ENCODE measurements at regions of chr6 and their contacts with region 1.

Region 1: DNA sequence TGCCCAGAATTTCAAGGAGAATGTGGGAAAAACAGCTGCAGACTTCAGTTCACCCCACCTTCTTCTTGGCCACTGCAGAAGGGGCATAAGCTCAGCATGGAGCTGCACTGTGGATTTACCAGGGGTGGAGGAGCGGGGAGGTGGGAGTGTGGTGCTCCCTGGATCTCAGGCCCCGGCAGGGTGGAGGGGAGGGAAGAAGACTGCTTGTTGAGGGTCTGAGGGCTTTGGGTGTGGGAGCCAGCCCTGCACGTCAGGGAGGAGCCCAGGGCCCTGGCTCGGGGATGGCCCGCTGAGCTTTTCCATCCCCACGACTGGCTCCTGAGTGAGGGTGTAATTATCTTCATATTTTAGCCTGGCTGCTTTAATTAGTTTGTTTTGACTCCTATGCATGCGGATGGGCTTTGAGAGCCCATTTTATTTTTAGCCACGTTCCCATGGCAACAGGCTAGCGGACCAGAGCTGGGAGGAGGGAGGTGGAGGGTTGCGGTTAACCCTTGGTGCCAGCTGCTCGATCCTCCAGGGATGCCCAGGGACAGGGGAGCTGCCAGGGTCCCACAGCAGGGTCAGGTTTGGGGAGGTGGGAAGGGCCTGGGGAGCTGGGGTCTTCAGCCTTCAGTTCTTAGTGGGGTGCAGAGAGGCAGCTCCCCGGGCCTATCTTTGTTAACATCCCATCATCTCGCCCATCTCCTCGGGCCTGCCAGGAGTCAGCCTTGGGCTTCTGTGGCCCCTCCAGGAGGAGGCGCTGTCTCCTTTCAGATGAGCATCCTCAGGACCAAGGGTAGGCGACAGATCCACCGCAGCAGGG is 68.2 kb downstream of the RAB44 start:
- H3K4me3 Mint-ChIP-seq: no peak overlapping the region
- H3K27ac Mint-ChIP-seq: no peak overlapping the region
- H3K4me1 Mint-ChIP-seq: peaks cover 28% of the 10 kb centered on the region
- H3K27me3 Mint-ChIP-seq: peaks cover 5% of the 10 kb centered on the region

Region 2: DNA sequence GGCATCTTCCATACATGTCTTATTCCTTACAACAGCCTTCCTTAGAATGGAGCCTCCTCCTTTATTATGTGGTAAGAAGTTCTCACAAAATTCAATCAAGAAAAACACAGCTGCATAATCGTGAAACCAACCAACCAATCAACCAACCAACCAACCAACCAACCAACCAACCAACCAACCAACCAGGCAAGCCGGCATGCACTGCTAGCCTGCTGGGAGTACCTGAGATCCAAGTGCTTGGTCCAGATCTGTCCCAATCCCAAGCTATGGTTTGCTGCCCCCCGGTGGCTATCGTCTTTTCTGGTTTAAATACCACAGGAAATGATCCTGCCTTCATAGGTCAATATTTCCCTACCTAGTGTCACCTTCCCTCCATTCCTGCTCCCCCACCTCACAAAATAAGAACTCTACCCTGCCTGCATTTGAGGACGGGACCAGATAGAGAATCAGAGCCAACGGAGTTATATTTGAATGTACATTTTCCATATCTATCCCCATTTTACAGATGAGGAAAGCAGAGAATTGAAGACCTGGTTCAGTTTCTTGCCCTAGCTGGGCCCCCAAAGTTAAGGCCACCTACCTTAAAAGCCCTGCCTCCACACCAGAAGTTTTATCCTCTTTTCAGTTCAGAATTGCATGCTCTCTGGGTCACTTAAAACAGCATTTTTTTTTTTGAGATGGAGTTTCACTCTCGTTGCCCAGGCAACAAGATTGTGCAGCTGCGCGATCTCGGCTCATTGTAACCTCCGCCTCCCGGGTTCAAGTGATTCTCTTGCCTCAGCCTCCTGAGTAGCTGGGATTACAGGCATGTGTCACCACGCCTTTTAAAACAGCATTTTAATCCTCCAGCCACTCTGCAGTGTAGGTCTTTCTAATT is 41.0 kb before region 1 on chr6:
- intact Hi-C with region 1: no loop called
- H3K4me3 Mint-ChIP-seq: no peak overlapping the region
- H3K27ac Mint-ChIP-seq: peak overlapping the region; percentile 22
- H3K4me1 Mint-ChIP-seq: peaks cover 43% of the 10 kb centered on the region
- H3K27me3 Mint-ChIP-seq: no peaks in the 10 kb centered on the region

Region 3: GRCh38 chr6:36781669-36782068 is 15.9 kb after region 1 on chr6:
- intact Hi-C with region 1: loop called (anchors 2 kb)
- H3K4me3 Mint-ChIP-seq: no peak overlapping the region
- H3K27ac Mint-ChIP-seq: peak overlapping the region; percentile 63
- H3K4me1 Mint-ChIP-seq: peaks cover 55% of the 10 kb centered on the region
- H3K27me3 Mint-ChIP-seq: peaks cover 9% of the 10 kb centered on the region

Region 4: DNA sequence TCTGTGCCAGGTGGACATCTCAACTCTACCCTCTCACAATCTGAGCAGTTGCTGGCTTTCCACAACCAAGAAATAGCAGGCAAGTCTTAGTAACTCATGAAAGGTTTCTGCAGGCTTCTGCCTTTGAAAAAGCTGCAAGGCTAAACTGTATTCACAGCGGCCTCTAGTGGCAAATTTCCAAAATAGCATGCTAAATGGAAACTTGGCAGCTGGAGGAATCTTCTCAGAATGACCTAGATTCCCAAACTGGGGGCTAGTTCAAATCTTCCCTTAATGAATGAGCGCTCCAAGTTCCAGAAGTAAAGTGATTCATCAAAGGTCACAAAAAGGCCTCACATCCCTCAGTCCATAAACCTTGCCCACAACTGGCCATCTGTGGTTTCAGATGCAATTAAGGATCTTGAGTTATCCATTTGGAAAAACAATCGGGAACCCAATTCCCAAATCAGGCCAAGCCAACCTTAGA is 85.4 kb after region 1 on chr6:
- intact Hi-C with region 1: loop called (anchors 1 kb)
- H3K4me3 Mint-ChIP-seq: no peak overlapping the region
- H3K27ac Mint-ChIP-seq: no peak overlapping the region
- H3K4me1 Mint-ChIP-seq: peaks cover 88% of the 10 kb centered on the region
- H3K27me3 Mint-ChIP-seq: no peaks in the 10 kb centered on the region

Region 5: GRCh38 chr6:37018198-37019064 is 252.6 kb after region 1 on chr6:
- intact Hi-C with region 1: loop called (anchors 1 kb)
- H3K4me3 Mint-ChIP-seq: no peak overlapping the region
- H3K27ac Mint-ChIP-seq: peak overlapping the region; percentile 1
- H3K4me1 Mint-ChIP-seq: peaks cover 88% of the 10 kb centered on the region
- H3K27me3 Mint-ChIP-seq: no peaks in the 10 kb centered on the region

Region 6: GRCh38 chr6:37061157-37061804 is 295.5 kb after region 1 on chr6:
- intact Hi-C with region 1: no loop called
- H3K4me3 Mint-ChIP-seq: no peak overlapping the region
- H3K27ac Mint-ChIP-seq: no peak overlapping the region
- H3K4me1 Mint-ChIP-seq: peaks cover 41% of the 10 kb centered on the region
- H3K27me3 Mint-ChIP-seq: peaks cover 6% of the 10 kb centered on the region